Activated CD8-positive, alpha-beta T cell treated with anti-CD3 and anti-CD28 coated beads for 36 hours (primary cell): ENCODE measurements at regions of chr3 and their contacts with region 1.

Region 1: GRCh38 chr3:185942907-185943759 is 5.3 kb upstream of the TRA2B start:
- DNase-seq: peak; percentile 92
- ATAC-seq: peak; percentile 100
- H3K4me3 Mint-ChIP-seq: no peak overlapping the region
- H3K27ac Mint-ChIP-seq: no peak overlapping the region
- H3K4me1 Mint-ChIP-seq: peaks cover 22% of the 10 kb centered on the region
- H3K27me3 Mint-ChIP-seq: peaks cover 8% of the 10 kb centered on the region
- CTCF ChIP-seq: peak; percentile 99

Region 2: DNA sequence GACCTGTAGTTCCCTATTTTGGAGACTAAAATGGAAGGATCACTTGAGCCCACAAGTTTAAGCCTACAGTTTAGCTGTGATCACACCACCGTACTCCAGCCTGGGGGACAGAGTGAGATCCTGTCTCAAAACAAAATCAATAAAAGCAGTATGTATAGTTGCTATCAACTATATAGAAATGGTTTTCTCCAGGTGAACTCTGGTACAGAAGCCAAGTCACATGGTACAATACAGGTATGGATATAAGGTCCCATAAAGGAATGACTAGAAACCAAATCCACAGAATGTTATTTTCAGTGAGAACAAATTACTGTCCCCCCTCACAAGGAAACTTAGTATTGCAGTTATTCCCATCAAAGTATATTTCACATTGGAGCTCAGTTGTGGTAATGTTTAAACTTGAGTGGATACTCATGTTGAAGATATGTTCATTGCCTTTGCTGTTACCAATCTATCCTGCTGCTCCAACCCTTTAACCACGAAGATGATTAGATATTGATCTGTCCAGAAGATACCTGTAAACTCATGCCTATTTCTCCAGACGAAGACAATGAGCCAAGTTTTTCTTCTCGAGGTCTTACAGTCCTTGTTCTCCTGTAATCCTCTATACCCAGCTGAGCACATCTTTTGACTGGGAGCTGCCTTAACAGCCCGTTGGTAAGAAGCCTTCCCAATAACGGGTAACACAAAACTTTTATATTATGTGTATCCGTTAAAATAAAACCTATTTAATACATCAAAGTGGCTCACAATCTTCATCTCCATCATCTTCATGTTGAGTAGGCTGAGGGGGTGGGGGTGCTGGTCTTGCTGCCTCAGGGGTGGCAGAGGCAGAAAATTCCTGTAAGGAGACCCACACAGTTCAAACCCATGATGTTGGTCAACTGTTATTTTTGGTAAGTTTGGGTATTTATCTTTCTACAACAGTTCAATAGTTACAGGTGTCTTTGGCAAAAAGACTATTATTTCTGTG is 29.9 kb before region 1 on chr3:
- CTCF ChIA-PET with region 1: interaction called, 10 read pairs
- POLR2A ChIA-PET with region 1: interaction called, 20 read pairs
- intact Hi-C with region 1: no loop called
- DNase-seq: no peak
- ATAC-seq: peak; percentile 10
- H3K4me3 Mint-ChIP-seq: no peak overlapping the region
- H3K27ac Mint-ChIP-seq: peak overlapping the region; percentile 40
- H3K4me1 Mint-ChIP-seq: peaks cover 2% of the 10 kb centered on the region
- H3K27me3 Mint-ChIP-seq: no peaks in the 10 kb centered on the region
- CTCF ChIP-seq: no peak

Region 3: GRCh38 chr3:185959609-185960517 is 16.7 kb after region 1 on chr3:
- CTCF ChIA-PET with region 1: interaction called, 186 read pairs
- POLR2A ChIA-PET with region 1: interaction called, 15 read pairs
- intact Hi-C with region 1: no loop called
- DNase-seq: peak; percentile 14
- ATAC-seq: peak; percentile 47
- H3K4me3 Mint-ChIP-seq: no peak overlapping the region
- H3K27ac Mint-ChIP-seq: no peak overlapping the region
- H3K4me1 Mint-ChIP-seq: peaks cover 2% of the 10 kb centered on the region
- H3K27me3 Mint-ChIP-seq: peaks cover 7% of the 10 kb centered on the region
- CTCF ChIP-seq: no peak

Region 4: DNA sequence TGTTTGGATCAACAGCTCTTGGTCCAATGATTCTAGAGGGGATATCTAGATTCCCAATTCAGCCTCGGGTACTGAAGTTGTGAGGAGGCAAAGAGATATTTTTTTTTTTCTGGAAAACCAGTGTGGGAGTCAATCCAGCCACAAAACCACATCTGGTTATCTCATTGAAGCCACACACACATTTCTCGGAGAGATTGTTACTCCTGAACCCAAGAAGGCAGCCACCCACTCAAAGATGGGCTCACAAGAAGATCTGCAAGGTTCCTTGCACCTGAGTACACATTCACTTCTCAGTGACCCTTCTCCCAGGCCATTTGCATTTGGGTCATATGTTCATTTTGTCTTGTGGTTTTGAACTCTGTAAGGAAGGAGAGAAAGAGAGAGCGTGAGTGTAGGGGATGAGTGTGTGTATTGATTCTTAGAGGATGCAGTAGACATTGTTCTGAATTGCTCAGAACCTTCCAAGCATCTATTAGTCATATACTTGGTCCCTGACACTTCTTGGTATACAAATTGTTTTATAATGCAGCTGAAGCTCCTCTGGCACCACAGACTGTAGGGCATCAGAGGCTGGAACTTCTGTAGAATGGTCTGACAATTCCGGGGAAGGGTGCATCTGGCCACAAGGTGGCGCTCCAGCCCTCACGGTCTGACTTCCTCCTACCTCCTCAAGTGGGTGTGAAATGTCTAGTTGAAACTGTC is 34.0 kb after region 1 on chr3:
- CTCF ChIA-PET with region 1: interaction called, 46 read pairs
- POLR2A ChIA-PET with region 1: interaction called, 3 read pairs
- intact Hi-C with region 1: no loop called
- DNase-seq: peak; percentile 96
- ATAC-seq: peak; percentile 93
- H3K4me3 Mint-ChIP-seq: peak overlapping the region; percentile 0
- H3K27ac Mint-ChIP-seq: peak overlapping the region; percentile 36
- H3K4me1 Mint-ChIP-seq: peaks cover 16% of the 10 kb centered on the region
- H3K27me3 Mint-ChIP-seq: peaks cover 8% of the 10 kb centered on the region
- CTCF ChIP-seq: peak; percentile 90

Region 5: GRCh38 chr3:186241910-186242821 is 299.0 kb after region 1 on chr3:
- CTCF ChIA-PET with region 1: interaction called, 11 read pairs
- POLR2A ChIA-PET with region 1: no interaction called
- intact Hi-C with region 1: no loop called
- DNase-seq: peak; percentile 87
- ATAC-seq: peak; percentile 99
- H3K4me3 Mint-ChIP-seq: peak overlapping the region; percentile 17
- H3K27ac Mint-ChIP-seq: no peak overlapping the region
- H3K4me1 Mint-ChIP-seq: peaks cover 6% of the 10 kb centered on the region
- H3K27me3 Mint-ChIP-seq: peaks cover 20% of the 10 kb centered on the region
- CTCF ChIP-seq: peak; percentile 64

Region 6: DNA sequence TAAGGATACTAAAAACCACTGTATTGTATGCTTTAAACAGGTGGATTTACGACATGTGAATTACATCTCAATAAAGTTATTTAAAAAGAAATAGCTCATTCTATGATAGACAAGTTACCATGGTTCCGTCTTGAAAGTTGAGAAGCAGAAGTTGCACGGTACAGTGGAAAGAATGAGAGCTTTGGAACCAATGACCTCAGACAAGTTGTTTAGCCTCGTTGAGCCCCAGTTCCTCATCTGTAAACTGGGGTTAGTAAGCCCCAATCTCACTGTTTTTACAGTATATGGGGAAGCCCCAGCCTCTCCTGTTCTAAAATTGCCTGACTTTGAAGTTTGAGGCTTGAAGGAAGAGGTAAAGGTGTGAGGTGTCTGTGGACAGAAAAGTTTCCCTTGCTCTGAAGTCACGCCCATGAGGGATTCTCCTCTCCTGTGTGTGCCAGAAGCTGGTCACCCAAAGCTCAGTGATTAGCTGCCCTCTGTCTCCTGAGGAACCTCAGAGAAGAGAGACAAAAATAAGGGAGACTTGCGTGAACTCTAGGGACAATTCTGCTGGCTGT is 591.1 kb after region 1 on chr3:
- CTCF ChIA-PET with region 1: interaction called, 19 read pairs
- POLR2A ChIA-PET with region 1: no interaction called
- intact Hi-C with region 1: no loop called
- DNase-seq: peak; percentile 73
- ATAC-seq: peak; percentile 87
- H3K4me3 Mint-ChIP-seq: peak overlapping the region; percentile 49
- H3K27ac Mint-ChIP-seq: peak overlapping the region; percentile 96
- H3K4me1 Mint-ChIP-seq: peaks cover 92% of the 10 kb centered on the region
- H3K27me3 Mint-ChIP-seq: no peaks in the 10 kb centered on the region
- CTCF ChIP-seq: no peak